Mammary epithelial cell (primary cell): ENCODE measurements at regions of chrX and their contacts with region 1.

Region 1: DNA sequence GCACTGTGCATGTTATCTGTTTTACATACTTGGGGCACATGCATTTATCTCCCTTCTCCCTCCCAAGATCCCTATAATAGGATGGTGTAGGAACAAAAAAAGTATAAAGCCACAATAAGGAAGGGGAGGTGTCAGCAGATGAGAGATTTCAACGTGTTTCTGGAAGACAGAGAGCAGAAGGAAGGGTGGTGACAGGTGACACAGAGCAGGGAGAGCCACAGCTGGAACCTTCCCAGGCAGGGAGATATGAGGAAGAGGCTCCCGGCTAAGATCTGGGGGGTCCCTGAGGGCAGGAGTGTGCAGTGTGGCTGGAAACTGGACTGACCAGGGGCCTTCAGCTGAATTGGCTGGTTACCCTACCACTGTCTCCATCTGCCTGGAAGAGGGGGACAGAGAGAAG is 107.4 kb downstream of the BCOR start:
- DNase-seq: no peak
- H3K4me3 ChIP-seq: no peak overlapping the region
- H3K27ac ChIP-seq: no peak overlapping the region
- H3K4me1 ChIP-seq: no peaks in the 10 kb centered on the region
- H3K27me3 ChIP-seq: no peaks in the 10 kb centered on the region
- CTCF ChIP-seq: no peak

Region 2: DNA sequence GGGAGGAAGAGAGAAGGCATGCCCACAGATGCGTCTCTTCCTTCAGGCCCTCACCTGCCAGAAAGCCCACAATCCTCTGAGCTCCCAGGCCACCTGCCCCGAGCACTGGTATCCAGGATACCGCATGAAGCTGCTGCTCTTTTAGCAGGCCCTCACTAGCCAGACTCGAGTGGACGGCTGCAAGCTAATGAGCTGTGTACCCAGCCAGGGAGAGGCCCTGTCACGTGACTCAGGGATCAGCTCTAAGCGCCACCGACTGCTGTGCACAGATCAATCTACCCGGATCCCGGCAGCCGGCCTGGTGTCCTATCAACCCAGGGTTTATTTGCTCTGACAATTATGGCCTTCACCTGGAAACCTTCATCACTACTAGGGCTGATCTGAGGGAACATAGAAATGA is 68.3 kb after region 1 on chrX:
- CTCF ChIA-PET with region 1: no interaction called
- dilution Hi-C with region 1: loop called (anchors 5 kb)
- in situ Hi-C with region 1: no loop called
- intact Hi-C with region 1: no loop called
- DNase-seq: no peak
- H3K4me3 ChIP-seq: no peak overlapping the region
- H3K27ac ChIP-seq: no peak overlapping the region
- H3K4me1 ChIP-seq: peaks cover 13% of the 10 kb centered on the region
- H3K27me3 ChIP-seq: no peaks in the 10 kb centered on the region
- CTCF ChIP-seq: no peak